Activated CD4-positive, alpha-beta T cell treated with anti-CD3 and anti-CD28 coated beads for 36 hours (primary cell): ENCODE measurements at regions of chr12 and their contacts with region 1.

Region 1: DNA sequence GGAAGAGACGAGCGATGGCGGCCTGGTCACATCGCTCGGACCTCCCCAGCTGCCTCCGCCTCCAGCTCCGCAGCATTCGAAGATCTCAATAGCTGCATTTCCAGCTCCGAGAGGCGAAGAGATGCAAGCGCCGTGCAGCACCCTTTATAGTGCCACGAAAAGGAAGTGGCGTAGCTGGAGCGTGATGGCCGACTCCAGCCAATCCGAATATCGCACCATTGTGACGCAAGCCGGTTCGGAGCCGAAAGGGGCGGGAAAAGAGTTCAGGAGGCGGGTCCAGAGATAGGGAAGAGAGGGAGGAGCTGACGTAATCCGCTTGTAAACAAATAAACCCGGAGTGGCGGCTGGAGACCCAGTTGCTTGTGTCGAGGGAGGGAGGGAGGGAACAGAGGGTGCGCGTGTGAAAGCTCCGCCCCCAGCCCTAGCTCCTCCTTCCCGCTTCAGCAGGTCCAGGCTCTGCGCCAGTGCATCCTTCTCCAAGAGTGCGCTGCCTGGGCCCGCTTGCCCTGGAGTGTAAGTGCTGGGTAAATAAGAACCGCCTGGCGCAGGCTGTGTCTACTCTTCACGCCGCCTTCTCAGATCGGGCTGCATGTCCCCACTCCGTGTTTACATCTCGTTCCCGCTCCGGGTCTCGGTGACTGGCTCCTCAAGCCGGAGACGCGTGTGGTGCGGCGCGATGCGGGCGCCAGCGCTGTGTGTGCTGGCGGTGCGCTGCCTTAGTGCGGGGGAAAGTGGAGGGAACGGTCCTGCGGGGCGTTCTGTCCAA is at the start of gene BTG1:
- DNase-seq: peak; percentile 99
- ATAC-seq: peak; percentile 78
- H3K4me3 Mint-ChIP-seq: peak within 1 kb of the TSS; percentile 99
- H3K27ac Mint-ChIP-seq: peak within 1 kb of the TSS; percentile 99
- H3K4me1 Mint-ChIP-seq: peaks cover 22% of the 10 kb centered on the region
- H3K27me3 Mint-ChIP-seq: no peaks in the 10 kb centered on the region
- total RNA-seq, gene BTG1: 76.6 to 131 TPM

Region 2: GRCh38 chr12:91778938-91779400 is 366.9 kb before region 1 on chr12:
- CTCF ChIA-PET with region 1: interaction called, 3 read pairs
- POLR2A ChIA-PET with region 1: interaction called, 4 read pairs
- intact Hi-C with region 1: loop called in 1 of 2 experiments (anchors 2 kb)
- DNase-seq: peak; percentile 63
- ATAC-seq: peak; percentile 91
- H3K4me3 Mint-ChIP-seq: peak overlapping the region; percentile 46
- H3K27ac Mint-ChIP-seq: peak overlapping the region; percentile 81
- H3K4me1 Mint-ChIP-seq: peaks cover 42% of the 10 kb centered on the region
- H3K27me3 Mint-ChIP-seq: no peaks in the 10 kb centered on the region

Region 3: DNA sequence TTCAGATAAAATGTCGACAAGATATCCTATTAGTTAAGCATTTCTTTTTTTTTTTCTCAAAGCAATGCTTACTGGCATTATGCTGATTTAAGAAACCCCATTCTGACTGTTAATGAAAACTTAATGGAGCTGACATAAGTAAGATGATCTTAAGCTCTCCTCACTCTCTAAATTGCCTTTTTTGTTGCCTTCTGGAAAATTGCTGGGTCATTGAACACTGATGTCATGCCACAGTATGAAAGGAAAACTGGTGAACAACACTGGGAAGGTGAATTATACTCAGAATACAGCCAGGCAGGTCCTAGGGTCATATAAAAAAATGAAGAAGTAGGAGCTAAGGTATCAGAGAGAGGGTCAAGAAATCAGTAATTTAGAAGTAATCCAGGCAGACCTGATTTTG is 180.1 kb before region 1 on chr12:
- CTCF ChIA-PET with region 1: no interaction called
- POLR2A ChIA-PET with region 1: no interaction called
- intact Hi-C with region 1: no loop called
- DNase-seq: no peak
- ATAC-seq: no peak
- H3K4me3 Mint-ChIP-seq: no peak overlapping the region
- H3K27ac Mint-ChIP-seq: no peak overlapping the region
- H3K4me1 Mint-ChIP-seq: peaks cover 6% of the 10 kb centered on the region
- H3K27me3 Mint-ChIP-seq: no peaks in the 10 kb centered on the region

Region 4: GRCh38 chr12:91991399-91992187 is 154.3 kb before region 1 on chr12:
- CTCF ChIA-PET with region 1: interaction called, 4 read pairs
- POLR2A ChIA-PET with region 1: interaction called, 7 read pairs
- intact Hi-C with region 1: loop called (anchors 2 to 5 kb)
- DNase-seq: no peak
- ATAC-seq: peak; percentile 66
- H3K4me3 Mint-ChIP-seq: no peak overlapping the region
- H3K27ac Mint-ChIP-seq: no peak overlapping the region
- H3K4me1 Mint-ChIP-seq: peaks cover 54% of the 10 kb centered on the region
- H3K27me3 Mint-ChIP-seq: no peaks in the 10 kb centered on the region

Region 5: GRCh38 chr12:92065018-92065499 is 80.9 kb before region 1 on chr12:
- CTCF ChIA-PET with region 1: interaction called, 4 read pairs
- POLR2A ChIA-PET with region 1: interaction called, 10 read pairs
- intact Hi-C with region 1: loop called in 1 of 2 experiments (anchors 2 kb)
- DNase-seq: peak; percentile 71
- ATAC-seq: peak; percentile 76
- H3K4me3 Mint-ChIP-seq: peak overlapping the region; percentile 30
- H3K27ac Mint-ChIP-seq: peak overlapping the region; percentile 89
- H3K4me1 Mint-ChIP-seq: peaks cover 57% of the 10 kb centered on the region
- H3K27me3 Mint-ChIP-seq: no peaks in the 10 kb centered on the region

Region 6: GRCh38 chr12:92208613-92209121 is 62.8 kb after region 1 on chr12:
- CTCF ChIA-PET with region 1: interaction called, 3 read pairs
- POLR2A ChIA-PET with region 1: interaction called, 30 read pairs
- intact Hi-C with region 1: loop called (anchors 1 kb)
- DNase-seq: peak; percentile 40
- ATAC-seq: peak; percentile 77
- H3K4me3 Mint-ChIP-seq: peak overlapping the region; percentile 67
- H3K27ac Mint-ChIP-seq: peak overlapping the region; percentile 81
- H3K4me1 Mint-ChIP-seq: peaks cover 32% of the 10 kb centered on the region
- H3K27me3 Mint-ChIP-seq: no peaks in the 10 kb centered on the region

Region 7: GRCh38 chr12:92505254-92506231 is 359.6 kb after region 1 on chr12:
- CTCF ChIA-PET with region 1: interaction called, 5 read pairs
- POLR2A ChIA-PET with region 1: interaction called, 10 read pairs
- intact Hi-C with region 1: loop called in 1 of 2 experiments (anchors 1 kb)
- DNase-seq: peak; percentile 77
- ATAC-seq: peak; percentile 56
- H3K4me3 Mint-ChIP-seq: peak overlapping the region; percentile 72
- H3K27ac Mint-ChIP-seq: peak overlapping the region; percentile 99
- H3K4me1 Mint-ChIP-seq: peaks cover 50% of the 10 kb centered on the region
- H3K27me3 Mint-ChIP-seq: no peaks in the 10 kb centered on the region